ENCODE measurements at regions of chr4 and their contacts with region 1.

Region 1: GRCh38 chr4:89110986-89111832 is at the start of gene TIGD2:
- DNase-seq: peak; percentile 87 to 90 (median 89)
- H3K4me3 ChIP-seq: peak within 1 kb of the TSS; percentile 76 to 89
- H3K4me3 Mint-ChIP-seq: peak within 1 kb of the TSS; percentile 90 to 93 (median 91)
- H3K27ac ChIP-seq: peak within 1 kb of the TSS; percentile 58
- H3K27ac Mint-ChIP-seq: peak within 1 kb of the TSS; percentile 80 to 94 (median 91)
- H3K4me1 ChIP-seq: peaks cover 22% of the 10 kb centered on the region
- H3K4me1 Mint-ChIP-seq: peaks cover 15 to 31% (median 23%) of the 10 kb centered on the region in 4 donors
- H3K27me3 ChIP-seq: no peaks in the 10 kb centered on the region
- H3K27me3 Mint-ChIP-seq: peaks cover 0 to 7% of the 10 kb centered on the region in 2 donors
- total RNA-seq, gene TIGD2: 6.7 to 7.1 TPM

Region 2: GRCh38 chr4:88378691-88379559 is 732.3 kb before region 1 on chr4 and contains the start of gene HERC6:
- CTCF ChIA-PET with region 1: no interaction called
- POLR2A ChIA-PET with region 1: no interaction called
- intact Hi-C with region 1: loop called (anchors 10 kb)
- DNase-seq: peak; percentile 74 to 89 (median 80)
- H3K4me3 ChIP-seq: peak within 1 kb of the TSS; percentile 82 to 96
- H3K4me3 Mint-ChIP-seq: peak within 1 kb of the TSS; percentile 95 to 99 (median 97)
- H3K27ac ChIP-seq: peak within 1 kb of the TSS; percentile 86
- H3K27ac Mint-ChIP-seq: peak within 1 kb of the TSS; percentile 94 to 98 (median 97)
- H3K4me1 ChIP-seq: peaks cover 37% of the 10 kb centered on the region
- H3K4me1 Mint-ChIP-seq: peaks cover 37 to 54% (median 43%) of the 10 kb centered on the region in 4 donors
- H3K27me3 ChIP-seq: no peaks in the 10 kb centered on the region
- H3K27me3 Mint-ChIP-seq: no peaks in the 10 kb centered on the region
- total RNA-seq, gene HERC6: 26.8 to 29.5 TPM

Region 3: DNA sequence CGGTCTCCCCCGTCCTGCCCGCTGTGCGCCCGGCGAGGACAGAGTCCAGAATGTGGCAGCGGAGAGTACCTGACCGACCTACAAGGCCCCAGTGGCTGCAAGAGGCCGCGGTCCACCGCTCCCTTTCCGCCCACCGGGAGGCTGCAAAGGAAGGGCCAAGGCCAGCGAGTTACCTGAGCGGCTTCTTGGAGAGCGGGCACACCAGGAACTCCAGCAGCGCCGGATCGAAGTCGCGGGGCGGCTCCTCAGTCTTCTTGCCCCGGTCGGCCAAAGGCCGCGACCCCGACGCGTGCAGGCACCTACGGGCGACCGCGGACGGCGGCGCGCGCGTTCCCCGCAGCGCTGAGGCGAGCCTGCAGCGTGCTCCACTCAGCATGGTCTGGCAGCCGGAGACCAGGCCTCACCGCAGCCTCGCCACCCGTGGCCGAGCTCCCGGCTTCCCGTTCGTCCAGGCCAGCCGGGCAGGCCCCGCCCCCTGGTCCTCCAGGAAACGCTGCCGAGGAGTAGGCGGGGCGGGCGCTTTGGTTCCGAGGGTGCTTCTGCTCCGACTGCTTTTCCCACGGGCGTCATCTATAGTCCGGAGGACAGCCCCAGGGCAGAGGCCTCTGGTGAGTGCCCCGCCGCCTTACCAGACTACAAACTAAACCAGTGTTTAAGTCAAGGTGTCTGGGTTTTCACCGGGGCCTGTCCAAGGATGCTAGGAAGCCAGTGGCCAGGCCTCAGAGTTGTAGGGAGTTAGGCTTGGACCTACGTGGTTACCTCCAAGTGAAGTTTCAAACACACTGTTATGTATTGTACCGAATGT is 587.7 kb before region 1 on chr4 and contains the start of gene PYURF:
- CTCF ChIA-PET with region 1: no interaction called
- POLR2A ChIA-PET with region 1: no interaction called
- intact Hi-C with region 1: loop called (anchors 5 kb)
- DNase-seq: peak; percentile 60 to 73 (median 64)
- H3K4me3 ChIP-seq: peak within 1 kb of the TSS; percentile 62 to 69
- H3K4me3 Mint-ChIP-seq: peak within 1 kb of the TSS; percentile 91 to 97 (median 94)
- H3K27ac ChIP-seq: peak within 1 kb of the TSS; percentile 60
- H3K27ac Mint-ChIP-seq: peak within 1 kb of the TSS; percentile 89 to 96 (median 93)
- H3K4me1 ChIP-seq: peaks cover 17% of the 10 kb centered on the region
- H3K4me1 Mint-ChIP-seq: peaks cover 22 to 46% (median 32%) of the 10 kb centered on the region in 4 donors
- H3K27me3 ChIP-seq: no peaks in the 10 kb centered on the region
- H3K27me3 Mint-ChIP-seq: no peaks in the 10 kb centered on the region
- total RNA-seq, gene PYURF: 54.5 to 60.4 TPM

Region 4: DNA sequence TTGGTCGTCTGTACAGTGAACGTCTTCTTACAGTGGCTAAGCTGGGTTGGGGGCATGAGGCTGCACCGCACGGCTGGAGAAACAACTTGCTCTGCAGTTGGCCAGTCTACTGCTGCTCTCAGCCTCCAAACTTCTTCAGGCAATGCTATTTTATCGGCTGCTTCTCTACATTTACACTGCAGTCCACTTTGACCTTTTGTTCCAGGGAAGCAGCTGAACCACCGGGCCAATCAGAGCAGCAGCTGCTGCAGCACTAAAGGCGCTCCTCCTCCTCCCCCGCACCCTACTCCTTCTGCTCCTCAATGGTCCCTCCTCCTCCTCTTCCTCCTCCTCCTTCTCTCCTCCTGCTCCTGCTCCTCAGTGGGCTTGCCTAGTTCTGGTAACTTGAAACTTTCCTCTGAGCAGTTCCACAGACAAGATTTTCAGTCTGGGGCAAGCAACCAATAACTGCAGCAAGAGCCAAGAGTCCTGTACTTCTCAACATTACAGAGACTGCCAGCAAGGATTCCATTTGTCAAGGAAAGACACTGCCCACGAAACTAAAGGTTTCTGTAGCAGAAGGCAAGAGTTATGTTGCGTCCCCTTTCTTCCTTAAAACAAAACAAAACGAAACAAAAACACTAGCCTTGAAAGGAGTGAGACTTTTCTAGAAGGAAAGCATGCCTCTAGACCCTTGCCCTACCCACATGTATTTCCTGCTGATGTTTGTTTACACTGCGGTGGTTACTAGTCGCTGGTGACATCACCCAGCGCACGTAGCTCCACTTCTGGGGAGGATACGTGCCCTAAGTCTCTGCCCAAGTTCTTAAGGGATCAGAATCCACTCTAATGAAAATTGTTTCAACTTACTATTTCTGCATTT is 287.9 kb before region 1 on chr4:
- CTCF ChIA-PET with region 1: no interaction called
- POLR2A ChIA-PET with region 1: no interaction called
- intact Hi-C with region 1: loop called (anchors 1 kb)
- DNase-seq: peak; percentile 79 to 91 (median 88)
- H3K4me3 ChIP-seq: peak overlapping the region; percentile 57 to 72
- H3K4me3 Mint-ChIP-seq: peak overlapping the region; percentile 89 to 98 (median 94)
- H3K27ac ChIP-seq: peak overlapping the region; percentile 71
- H3K27ac Mint-ChIP-seq: peak overlapping the region; percentile 92 to 99 (median 98)
- H3K4me1 ChIP-seq: peaks cover 33% of the 10 kb centered on the region
- H3K4me1 Mint-ChIP-seq: peaks cover 23 to 45% (median 32%) of the 10 kb centered on the region in 4 donors
- H3K27me3 ChIP-seq: no peaks in the 10 kb centered on the region
- H3K27me3 Mint-ChIP-seq: peaks cover 0 to under 1% of the 10 kb centered on the region in 2 donors

Region 5: GRCh38 chr4:89029591-89029990 is 81.6 kb before region 1 on chr4:
- CTCF ChIA-PET with region 1: no interaction called
- POLR2A ChIA-PET with region 1: interaction called, 3 read pairs
- intact Hi-C with region 1: loop called (anchors 1 kb)
- DNase-seq: peak in 4 of 5 donors; percentile 33 to 69 (median 46)
- H3K4me3 ChIP-seq: no peak overlapping the region
- H3K4me3 Mint-ChIP-seq: peak overlapping the region in 7 of 8 donors; percentile 7 to 53 (median 26)
- H3K27ac ChIP-seq: no peak overlapping the region
- H3K27ac Mint-ChIP-seq: peak overlapping the region in 6 of 7 donors; percentile 3 to 88 (median 78)
- H3K4me1 ChIP-seq: no peaks in the 10 kb centered on the region
- H3K4me1 Mint-ChIP-seq: peaks cover 0 to 5% (median 1%) of the 10 kb centered on the region in 4 donors
- H3K27me3 ChIP-seq: no peaks in the 10 kb centered on the region
- H3K27me3 Mint-ChIP-seq: peaks cover 0 to 2% of the 10 kb centered on the region in 2 donors

Region 6: GRCh38 chr4:89158884-89159503 is 47.8 kb after region 1 on chr4:
- CTCF ChIA-PET with region 1: no interaction called
- POLR2A ChIA-PET with region 1: no interaction called
- intact Hi-C with region 1: no loop called
- DNase-seq: peak in 4 of 5 donors; percentile 22 to 39 (median 34)
- H3K4me3 ChIP-seq: no peak overlapping the region
- H3K4me3 Mint-ChIP-seq: no peak overlapping the region
- H3K27ac ChIP-seq: no peak overlapping the region
- H3K27ac Mint-ChIP-seq: no peak overlapping the region
- H3K4me1 ChIP-seq: no peaks in the 10 kb centered on the region
- H3K4me1 Mint-ChIP-seq: peaks cover 0 to 2% (median 0%) of the 10 kb centered on the region in 4 donors
- H3K27me3 ChIP-seq: no peaks in the 10 kb centered on the region
- H3K27me3 Mint-ChIP-seq: peaks cover 0 to 1% of the 10 kb centered on the region in 2 donors

Region 7: DNA sequence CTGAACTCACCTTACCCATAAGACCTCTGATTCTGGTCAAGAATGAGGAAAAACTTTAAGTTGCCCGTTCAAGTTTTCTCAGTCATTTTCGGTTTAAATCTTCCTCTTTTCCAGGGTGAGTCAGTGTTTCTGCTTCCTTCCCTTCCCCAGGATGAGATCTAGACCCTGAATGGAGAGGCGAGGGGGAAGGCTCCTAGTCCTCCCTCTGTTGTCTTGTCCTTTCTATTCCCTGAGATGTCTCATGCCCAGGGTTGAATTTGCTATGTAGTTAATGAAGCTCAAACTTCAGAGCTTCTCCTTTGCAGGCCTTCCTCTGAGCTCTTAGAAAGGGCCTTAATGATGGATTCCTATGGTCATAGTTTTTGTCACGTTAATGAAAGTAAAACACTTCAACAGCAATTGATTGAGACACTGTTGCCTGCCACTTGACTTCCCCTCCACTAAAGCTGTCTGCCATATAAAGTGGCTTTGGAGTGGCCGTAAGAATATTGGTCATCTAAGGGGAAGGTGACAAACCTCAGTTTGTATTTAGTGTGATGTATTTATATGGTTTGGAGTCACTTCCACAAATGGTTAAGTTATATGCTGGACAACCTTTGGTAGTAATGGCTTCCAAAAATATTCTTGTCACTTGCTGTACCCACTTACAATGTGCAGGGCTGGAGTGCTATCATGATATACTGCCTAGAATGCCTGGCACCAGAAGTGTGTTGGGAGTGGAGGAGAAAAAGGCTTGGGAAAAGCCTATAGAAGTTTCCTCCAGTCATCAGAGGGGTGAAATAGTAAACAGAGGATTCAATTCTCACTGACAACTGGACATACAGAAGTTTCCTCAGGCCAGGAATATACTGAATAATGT is 220.7 kb after region 1 on chr4:
- CTCF ChIA-PET with region 1: no interaction called
- POLR2A ChIA-PET with region 1: no interaction called
- intact Hi-C with region 1: no loop called
- DNase-seq: no peak
- H3K4me3 ChIP-seq: no peak overlapping the region
- H3K4me3 Mint-ChIP-seq: no peak overlapping the region
- H3K27ac ChIP-seq: no peak overlapping the region
- H3K27ac Mint-ChIP-seq: peak overlapping the region in 1 of 7 donors; percentile 60
- H3K4me1 ChIP-seq: peaks cover 3% of the 10 kb centered on the region
- H3K4me1 Mint-ChIP-seq: peaks cover 0 to 6% (median 4%) of the 10 kb centered on the region in 4 donors
- H3K27me3 ChIP-seq: no peaks in the 10 kb centered on the region
- H3K27me3 Mint-ChIP-seq: no peaks in the 10 kb centered on the region

Region 8: GRCh38 chr4:89397464-89397863 is 286.3 kb after region 1 on chr4:
- CTCF ChIA-PET with region 1: no interaction called
- POLR2A ChIA-PET with region 1: no interaction called
- intact Hi-C with region 1: no loop called
- DNase-seq: no peak
- H3K4me3 ChIP-seq: no peak overlapping the region
- H3K4me3 Mint-ChIP-seq: no peak overlapping the region
- H3K27ac ChIP-seq: no peak overlapping the region
- H3K27ac Mint-ChIP-seq: no peak overlapping the region
- H3K4me1 ChIP-seq: no peaks in the 10 kb centered on the region
- H3K4me1 Mint-ChIP-seq: no peaks in the 10 kb centered on the region
- H3K27me3 ChIP-seq: no peaks in the 10 kb centered on the region
- H3K27me3 Mint-ChIP-seq: no peaks in the 10 kb centered on the region

Region 9: GRCh38 chr4:90127706-90128345 is 1016.6 kb after region 1 on chr4:
- CTCF ChIA-PET with region 1: no interaction called
- POLR2A ChIA-PET with region 1: no interaction called
- intact Hi-C with region 1: loop called (anchors 2 kb)
- DNase-seq: no peak
- H3K4me3 ChIP-seq: peak overlapping the region in 1 of 2 donors; percentile 43
- H3K4me3 Mint-ChIP-seq: peak overlapping the region; percentile 83 to 96 (median 86)
- H3K27ac ChIP-seq: no peak overlapping the region
- H3K27ac Mint-ChIP-seq: peak overlapping the region in 6 of 7 donors; percentile 54 to 93 (median 74)
- H3K4me1 ChIP-seq: peaks cover 18% of the 10 kb centered on the region
- H3K4me1 Mint-ChIP-seq: peaks cover 16 to 28% (median 19%) of the 10 kb centered on the region in 4 donors
- H3K27me3 ChIP-seq: no peaks in the 10 kb centered on the region
- H3K27me3 Mint-ChIP-seq: peaks cover 25 to 27% of the 10 kb centered on the region in 2 donors